Head of caudate nucleus (tissue), 42 donors: ENCODE measurements at regions of chr16 and their contacts with region 1.

Region 1: DNA sequence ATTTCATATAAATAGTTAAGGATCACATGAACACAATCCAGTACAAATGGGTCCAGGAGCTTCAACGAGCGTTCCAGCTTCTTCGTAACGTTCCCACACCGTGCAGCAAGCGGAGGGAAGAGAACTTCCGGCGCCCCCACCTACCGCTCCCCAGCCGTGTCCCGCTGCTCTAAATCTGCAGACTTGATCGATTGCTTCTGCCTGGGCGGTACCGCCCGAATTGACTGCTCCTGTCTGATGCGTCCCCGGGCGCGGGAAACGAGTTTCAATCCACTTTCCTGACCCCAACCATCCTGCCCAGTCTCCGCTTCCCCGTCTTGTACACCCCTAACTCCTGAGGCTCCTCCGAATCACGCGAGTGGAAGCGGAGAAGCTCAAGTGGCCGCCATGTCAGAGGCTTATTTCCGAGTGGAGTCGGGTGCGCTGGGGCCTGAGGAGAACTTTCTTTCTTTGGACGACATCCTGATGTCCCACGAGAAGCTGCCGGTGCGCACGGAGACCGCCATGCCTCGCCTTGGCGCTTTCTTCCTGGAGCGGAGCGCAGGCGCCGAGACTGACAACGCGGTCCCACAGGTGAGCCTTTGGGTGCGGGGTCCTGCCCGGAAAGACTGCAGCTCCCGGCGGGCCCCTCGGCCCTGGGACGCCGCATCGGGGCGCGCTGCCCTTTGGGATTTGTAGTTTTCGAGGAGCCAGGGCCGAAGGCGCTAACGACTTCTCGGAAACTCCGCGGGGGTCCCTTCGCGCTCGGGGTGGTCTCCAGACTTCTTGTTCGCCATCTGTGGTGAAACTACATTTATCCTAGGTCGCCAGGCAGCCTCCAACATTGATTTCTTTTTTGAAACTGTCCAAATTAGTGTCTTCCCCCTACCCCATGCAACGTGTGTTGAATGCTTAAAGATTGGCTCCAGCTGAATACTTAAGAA is at the start of gene GINS3:
- DNase-seq: peak; percentile 89 to 98 (median 94)

Region 2: GRCh38 chr16:56909527-56909979 is 1482.9 kb before region 1 on chr16:
- intact Hi-C with region 1: no loop called
- DNase-seq: no peak

Region 3: DNA sequence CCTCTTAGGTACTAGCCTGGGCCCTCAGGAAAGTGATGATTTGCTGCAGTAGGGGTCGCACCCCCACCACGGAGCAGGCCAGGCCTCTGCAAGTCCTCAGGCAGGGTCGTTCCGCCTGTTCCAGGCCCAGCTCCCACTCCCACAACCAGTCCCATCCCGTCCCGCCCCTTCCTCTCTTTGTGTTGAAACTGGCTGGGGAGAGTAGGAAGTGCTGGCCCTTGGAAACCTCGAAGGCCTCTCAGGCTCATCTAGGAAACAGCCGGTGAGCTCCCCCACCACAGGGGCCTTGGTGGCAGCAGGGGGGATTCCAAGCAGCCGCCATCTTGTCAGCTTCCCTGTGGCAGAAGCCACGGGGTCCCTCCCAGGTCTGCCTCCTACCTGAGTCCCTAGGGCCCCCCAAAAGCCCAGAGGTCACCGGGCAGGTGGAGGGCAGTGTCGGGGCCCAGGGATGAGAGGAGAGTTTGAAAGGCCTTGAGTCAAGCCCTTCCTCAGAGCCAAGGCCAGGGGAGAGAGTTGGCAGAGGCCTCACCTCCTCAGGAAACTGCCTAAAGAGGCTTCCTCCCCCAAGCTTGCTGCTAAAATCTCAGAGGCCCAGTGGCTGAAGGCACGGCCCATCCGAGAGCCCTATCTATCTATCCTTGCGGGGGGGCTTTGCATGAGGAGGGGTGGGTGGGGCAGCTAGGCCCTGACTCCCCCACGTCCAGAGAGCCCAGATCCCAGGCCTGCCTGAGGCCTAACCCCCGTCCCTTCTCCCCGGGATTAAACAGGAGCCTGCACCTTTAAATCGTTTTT is 344.7 kb before region 1 on chr16:
- intact Hi-C with region 1: no loop called
- DNase-seq: no peak

Region 4: GRCh38 chr16:58494981-58495520 is 102.6 kb after region 1 on chr16:
- intact Hi-C with region 1: loop called (anchors 5 kb)
- DNase-seq: peak; percentile 69 to 98 (median 91)